Sciatic nerve (tissue), 2 donors: ENCODE measurements at regions of chr7 and their contacts with region 1.

Region 1: DNA sequence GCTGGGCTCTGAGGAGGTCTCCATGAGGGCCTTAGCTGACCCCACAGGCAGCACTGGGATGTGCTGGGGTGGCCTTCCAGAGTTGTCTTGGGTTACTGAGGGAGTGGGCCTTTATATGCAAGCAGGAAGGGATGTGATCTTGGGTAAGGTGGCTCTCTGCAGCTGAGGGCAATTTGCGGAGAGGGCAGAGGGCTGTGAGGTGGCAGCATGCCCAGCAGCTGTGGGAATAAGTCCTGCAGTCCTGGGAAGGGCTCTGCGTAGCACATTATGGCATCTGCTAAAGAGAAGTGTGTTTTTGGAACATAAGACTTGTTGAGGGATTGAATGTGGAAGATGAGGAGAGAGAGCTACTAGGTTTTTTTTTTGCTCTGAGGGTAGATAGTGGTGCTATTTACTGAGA is 99.6 kb upstream of the KMT2E start:
- DNase-seq: no peak
- ATAC-seq: no peak

Region 2: GRCh38 chr7:104841798-104842197 is 72.6 kb before region 1 on chr7:
- intact Hi-C with region 1: loop called (anchors 2 kb)
- DNase-seq: no peak
- ATAC-seq: no peak